GM12878 (cell line): ENCODE measurements at regions of chr5 and their contacts with region 1.

Region 1: GRCh38 chr5:78964887-78965286 is 20.2 kb downstream of the ARSB start:
- DNase-seq: no peak
- ATAC-seq: peak; percentile 88
- H3K4me3 ChIP-seq: no peak overlapping the region
- H3K27ac ChIP-seq: no peak overlapping the region
- H3K4me1 ChIP-seq: no peaks in the 10 kb centered on the region
- H3K27me3 ChIP-seq: no peaks in the 10 kb centered on the region
- CTCF ChIP-seq: peak; percentile 43 to 70 (median 45); a peak in 4 of 6 replicates
- EP300 ChIP-seq: no peak
- POLR2A ChIP-seq: no peak
- RAD21 ChIP-seq: peak; percentile 92

Region 2: GRCh38 chr5:78886341-78887230 is 78.3 kb before region 1 on chr5:
- CTCF ChIA-PET with region 1: interaction called, 51 read pairs
- POLR2A ChIA-PET with region 1: no interaction called
- RAD21 ChIA-PET with region 1: interaction called, 6 read pairs
- SMC1A ChIA-PET with region 1: interaction called, 7 read pairs
- in situ Hi-C with region 1: no loop called
- intact Hi-C with region 1: loop called (anchors 1 kb)
- DNase-seq: no peak
- ATAC-seq: peak; percentile 25
- H3K4me3 ChIP-seq: no peak overlapping the region
- H3K27ac ChIP-seq: no peak overlapping the region
- H3K4me1 ChIP-seq: peaks cover 21% of the 10 kb centered on the region
- H3K27me3 ChIP-seq: no peaks in the 10 kb centered on the region; a peak in 1 of 4 replicates
- CTCF ChIP-seq: peak; percentile 37 to 52 (median 38); a peak in 5 of 6 replicates
- EP300 ChIP-seq: no peak
- POLR2A ChIP-seq: no peak
- RAD21 ChIP-seq: peak; percentile 51

Region 3: DNA sequence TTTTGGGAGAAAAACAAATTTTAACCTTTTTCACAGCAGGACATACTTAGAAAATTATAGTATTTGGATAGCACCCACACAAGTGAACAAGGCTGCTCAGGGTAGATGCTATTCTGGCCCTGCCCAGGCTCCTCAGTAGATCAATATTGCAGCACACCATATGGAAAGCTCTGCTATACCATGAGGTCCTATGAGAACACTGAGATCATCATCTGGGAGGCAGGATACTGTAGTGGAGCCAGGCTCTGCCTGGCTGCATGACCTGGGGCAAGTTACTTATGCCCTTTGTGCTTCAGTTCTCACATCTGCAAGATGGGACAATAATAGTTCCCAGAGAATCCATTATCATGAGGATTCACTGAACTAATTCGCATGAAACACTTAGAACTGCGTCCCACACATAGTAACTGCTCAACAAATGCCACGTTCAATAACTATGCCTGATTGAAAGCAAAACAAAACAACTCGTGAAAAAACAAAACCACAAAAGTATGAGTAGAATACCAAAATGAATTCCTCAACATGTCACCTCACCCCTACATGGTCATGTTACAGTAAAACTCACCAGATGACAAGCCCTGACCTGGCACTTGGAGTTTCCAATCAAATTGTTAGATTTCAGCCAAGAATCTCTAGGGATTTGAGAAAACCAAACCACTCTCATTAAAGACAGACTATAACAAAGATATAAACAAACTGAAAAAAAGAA is 11.6 kb before region 1 on chr5:
- CTCF ChIA-PET with region 1: interaction called, 10 read pairs
- POLR2A ChIA-PET with region 1: no interaction called
- RAD21 ChIA-PET with region 1: interaction called, 5 read pairs
- SMC1A ChIA-PET with region 1: interaction called, 5 read pairs
- in situ Hi-C with region 1: no loop called
- intact Hi-C with region 1: no loop called
- DNase-seq: no peak
- ATAC-seq: peak; percentile 92
- H3K4me3 ChIP-seq: no peak overlapping the region
- H3K27ac ChIP-seq: peak overlapping the region; percentile 55; the same call in 1 of the 2 replicates
- H3K4me1 ChIP-seq: peaks cover 20% of the 10 kb centered on the region
- H3K27me3 ChIP-seq: no peaks in the 10 kb centered on the region
- CTCF ChIP-seq: no peak
- EP300 ChIP-seq: no peak
- POLR2A ChIP-seq: no peak
- RAD21 ChIP-seq: no peak